Head of caudate nucleus (tissue), 42 donors: ENCODE measurements at regions of chr18 and their contacts with region 1.

Region 1: GRCh38 chr18:6414118-6414722 is 491 bp downstream of the L3MBTL4 start:
- DNase-seq: peak; percentile 25 to 88 (median 73)

Region 2: GRCh38 chr18:5424903-5425664 is 989.1 kb before region 1 on chr18:
- intact Hi-C with region 1: loop called (anchors 10 kb)
- DNase-seq: peak in 8 of 42 donors; percentile 25 to 59 (median 38)